Activated CD4-positive, alpha-beta T cell treated with anti-CD3 and anti-CD28 coated beads for 36 hours (primary cell): ENCODE measurements at regions of chr7 and their contacts with region 1.

Region 1: GRCh38 chr7:130182990-130183389 is 22.2 kb downstream of the TMEM209 start:
- DNase-seq: no peak
- ATAC-seq: peak; percentile 38
- H3K4me3 Mint-ChIP-seq: no peak overlapping the region
- H3K27ac Mint-ChIP-seq: peak overlapping the region; percentile 72
- H3K4me1 Mint-ChIP-seq: peaks cover 33% of the 10 kb centered on the region
- H3K27me3 Mint-ChIP-seq: no peaks in the 10 kb centered on the region

Region 2: GRCh38 chr7:130124711-130125110 is 58.3 kb before region 1 on chr7:
- CTCF ChIA-PET with region 1: no interaction called
- POLR2A ChIA-PET with region 1: no interaction called
- intact Hi-C with region 1: no loop called
- DNase-seq: no peak
- ATAC-seq: no peak
- H3K4me3 Mint-ChIP-seq: no peak overlapping the region
- H3K27ac Mint-ChIP-seq: no peak overlapping the region
- H3K4me1 Mint-ChIP-seq: no peaks in the 10 kb centered on the region
- H3K27me3 Mint-ChIP-seq: no peaks in the 10 kb centered on the region

Region 3: GRCh38 chr7:130205084-130205947 is 22.3 kb after region 1 on chr7 and contains the start of gene TMEM209:
- CTCF ChIA-PET with region 1: interaction called, 4 read pairs
- POLR2A ChIA-PET with region 1: interaction called, 5 read pairs
- intact Hi-C with region 1: loop called (anchors 1 to 2 kb)
- DNase-seq: peak; percentile 96
- ATAC-seq: peak; percentile 98
- H3K4me3 Mint-ChIP-seq: peak within 1 kb of the TSS; percentile 93
- H3K27ac Mint-ChIP-seq: peak within 1 kb of the TSS; percentile 100
- H3K4me1 Mint-ChIP-seq: peaks cover 35% of the 10 kb centered on the region
- H3K27me3 Mint-ChIP-seq: no peaks in the 10 kb centered on the region
- total RNA-seq, gene TMEM209: 41.0 to 57.0 TPM

Region 4: GRCh38 chr7:130227883-130228575 is 45.0 kb after region 1 on chr7:
- CTCF ChIA-PET with region 1: no interaction called
- POLR2A ChIA-PET with region 1: no interaction called
- intact Hi-C with region 1: no loop called
- DNase-seq: no peak
- ATAC-seq: no peak
- H3K4me3 Mint-ChIP-seq: no peak overlapping the region
- H3K27ac Mint-ChIP-seq: no peak overlapping the region
- H3K4me1 Mint-ChIP-seq: no peaks in the 10 kb centered on the region
- H3K27me3 Mint-ChIP-seq: no peaks in the 10 kb centered on the region

Region 5: DNA sequence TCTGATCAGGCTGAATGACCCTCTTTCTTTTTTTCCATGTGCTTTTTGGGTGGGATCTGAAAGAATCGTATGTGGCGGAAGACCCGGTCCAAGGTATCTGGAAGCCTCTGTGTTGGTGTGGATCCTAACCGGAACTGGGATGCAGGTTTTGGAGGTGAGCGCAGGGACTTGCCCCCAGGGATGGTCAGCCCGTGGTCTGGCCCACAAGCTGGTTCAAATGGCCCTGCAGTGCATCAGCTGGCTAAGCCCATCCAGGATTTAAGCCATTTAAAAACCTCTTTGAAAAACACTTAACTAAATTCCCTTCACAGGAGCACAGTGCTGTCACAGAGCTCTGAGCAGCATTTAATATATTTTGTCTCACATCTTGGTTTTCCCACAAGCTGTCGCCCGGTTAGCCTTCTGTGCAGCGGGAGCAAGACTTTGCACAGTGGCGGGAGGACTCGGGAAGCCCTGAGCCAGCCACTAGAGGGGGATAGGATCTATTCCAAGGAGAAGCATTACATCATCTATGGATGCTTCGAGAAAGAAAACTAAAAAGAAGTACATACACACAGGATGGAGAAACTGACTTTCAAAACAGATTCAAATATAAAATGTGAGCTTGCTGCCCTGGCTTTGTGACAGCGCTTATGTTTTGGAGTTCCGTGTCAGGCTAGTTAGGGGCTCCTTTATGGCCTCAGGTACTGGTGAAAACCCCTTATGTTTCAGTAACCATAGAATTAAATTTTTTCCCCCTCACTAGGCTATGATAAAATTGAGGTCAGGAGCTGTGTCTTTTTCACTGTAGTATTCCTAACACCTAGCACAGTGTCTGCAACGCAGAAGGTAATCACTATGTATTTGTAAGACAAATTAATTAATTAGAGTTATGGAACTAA is 95.0 kb after region 1 on chr7:
- CTCF ChIA-PET with region 1: no interaction called
- POLR2A ChIA-PET with region 1: no interaction called
- intact Hi-C with region 1: loop called (anchors 2 kb)
- DNase-seq: no peak
- ATAC-seq: no peak
- H3K4me3 Mint-ChIP-seq: no peak overlapping the region
- H3K27ac Mint-ChIP-seq: peak overlapping the region; percentile 79
- H3K4me1 Mint-ChIP-seq: peaks cover 37% of the 10 kb centered on the region
- H3K27me3 Mint-ChIP-seq: peaks cover 4% of the 10 kb centered on the region

Region 6: DNA sequence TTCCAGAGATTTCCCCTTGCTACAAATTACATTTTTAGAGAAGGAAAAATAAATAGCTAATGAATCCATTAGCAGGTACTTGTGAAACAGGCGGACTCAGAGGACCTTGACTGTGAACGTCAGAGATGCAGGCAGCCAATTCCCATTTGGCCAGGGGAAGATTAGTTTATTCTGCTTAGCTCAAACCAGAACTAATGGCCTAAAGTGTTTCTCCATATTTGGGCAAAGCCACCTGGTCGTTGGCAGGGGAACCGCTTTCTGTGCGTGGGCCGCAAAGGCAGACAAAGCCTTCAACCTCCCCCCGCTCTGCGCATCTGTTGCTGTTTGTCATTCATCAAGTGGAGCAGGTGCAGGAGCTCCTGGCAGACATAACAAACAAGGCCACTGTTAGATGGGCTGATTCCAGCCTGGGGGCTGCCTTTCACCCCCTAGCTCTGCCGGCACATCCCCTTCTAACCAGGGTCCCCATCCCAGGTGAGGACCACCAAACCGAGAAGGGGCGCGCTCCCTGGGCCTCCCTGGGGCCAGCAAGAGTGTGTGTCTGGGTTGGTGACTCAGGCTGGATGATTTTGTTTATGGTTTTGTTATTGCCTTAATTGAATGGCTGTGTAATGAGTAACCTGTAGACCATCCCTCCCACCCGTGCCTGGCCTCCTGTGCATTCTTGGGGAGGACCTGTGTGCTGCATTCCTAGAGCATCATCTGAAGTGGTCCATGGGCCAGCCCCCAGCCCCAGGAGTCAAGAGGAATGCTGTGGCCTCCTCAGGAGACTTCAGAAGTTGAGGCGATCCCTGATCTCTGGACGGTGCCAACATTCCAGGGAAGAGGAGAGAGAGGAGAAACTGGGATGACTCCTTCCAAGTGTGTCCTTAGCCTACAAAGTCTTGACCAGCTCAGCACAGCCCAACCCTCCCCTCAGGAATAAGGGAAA is 182.8 kb after region 1 on chr7:
- CTCF ChIA-PET with region 1: no interaction called
- POLR2A ChIA-PET with region 1: no interaction called
- intact Hi-C with region 1: loop called in 1 of 2 experiments (anchors 1 kb)
- DNase-seq: peak; percentile 57
- ATAC-seq: no peak
- H3K4me3 Mint-ChIP-seq: no peak overlapping the region
- H3K27ac Mint-ChIP-seq: no peak overlapping the region
- H3K4me1 Mint-ChIP-seq: peaks cover 43% of the 10 kb centered on the region
- H3K27me3 Mint-ChIP-seq: no peaks in the 10 kb centered on the region

Region 7: DNA sequence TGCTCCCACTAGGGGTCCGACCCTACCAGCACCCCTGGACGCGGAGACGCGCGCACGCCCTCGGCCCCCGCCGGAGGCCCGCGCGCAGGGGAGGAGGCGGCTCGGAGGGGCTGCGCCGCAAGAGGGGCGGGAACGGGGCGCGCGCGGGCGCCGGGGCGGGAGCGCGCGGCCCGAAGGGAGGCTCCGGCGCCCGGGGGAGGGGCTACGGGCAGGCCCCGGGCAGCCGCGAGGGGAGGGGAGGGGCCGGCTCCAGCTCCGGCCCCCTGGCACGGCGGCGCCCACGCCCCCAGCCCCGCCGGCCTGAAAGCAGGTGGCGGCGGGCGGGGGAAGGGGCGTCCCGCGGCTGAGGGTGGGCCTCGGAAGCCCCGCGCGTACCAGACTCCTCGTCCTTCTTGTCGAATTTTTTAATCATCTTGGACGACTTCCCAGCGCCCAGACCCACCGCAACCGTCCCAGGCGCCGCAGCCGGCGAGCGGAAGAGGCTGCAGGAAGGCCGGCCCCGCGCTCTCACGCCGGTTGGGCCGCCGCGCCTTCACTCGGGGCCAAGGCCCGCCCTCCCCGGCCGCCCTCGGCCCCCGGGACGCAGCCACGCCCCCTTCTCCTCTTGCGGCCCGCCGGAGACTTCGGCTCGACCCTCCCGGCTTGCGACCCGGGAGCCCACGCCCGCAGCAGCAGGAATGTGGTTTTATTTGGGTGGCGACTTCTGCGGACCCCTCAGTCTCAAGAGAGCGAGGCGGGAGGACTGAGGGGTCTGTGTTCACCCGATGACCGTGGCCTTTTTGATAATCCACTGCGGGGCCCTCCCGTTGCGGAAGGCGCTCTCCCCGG is 485.5 kb after region 1 on chr7 and contains the start of gene COPG2:
- CTCF ChIA-PET with region 1: no interaction called
- POLR2A ChIA-PET with region 1: no interaction called
- intact Hi-C with region 1: loop called in 1 of 2 experiments (anchors 1 kb)
- DNase-seq: peak; percentile 86
- ATAC-seq: peak; percentile 97
- H3K4me3 Mint-ChIP-seq: peak within 1 kb of the TSS; percentile 81
- H3K27ac Mint-ChIP-seq: peak within 1 kb of the TSS; percentile 70
- H3K4me1 Mint-ChIP-seq: peaks cover 16% of the 10 kb centered on the region
- H3K27me3 Mint-ChIP-seq: peaks cover 5% of the 10 kb centered on the region
- total RNA-seq, gene COPG2: 23.5 to 25.9 TPM

Region 8: GRCh38 chr7:130838738-130839137 is 655.7 kb after region 1 on chr7:
- CTCF ChIA-PET with region 1: no interaction called
- POLR2A ChIA-PET with region 1: no interaction called
- intact Hi-C with region 1: loop called in 1 of 2 experiments (anchors 1 kb)
- DNase-seq: peak; percentile 37
- ATAC-seq: peak; percentile 91
- H3K4me3 Mint-ChIP-seq: no peak overlapping the region
- H3K27ac Mint-ChIP-seq: peak overlapping the region; percentile 10
- H3K4me1 Mint-ChIP-seq: peaks cover 17% of the 10 kb centered on the region
- H3K27me3 Mint-ChIP-seq: peaks cover 30% of the 10 kb centered on the region

Region 9: GRCh38 chr7:131370523-131370968 is 1187.6 kb after region 1 on chr7:
- CTCF ChIA-PET with region 1: no interaction called
- POLR2A ChIA-PET with region 1: no interaction called
- intact Hi-C with region 1: loop called in 1 of 2 experiments (anchors 5 kb)
- DNase-seq: peak; percentile 30
- ATAC-seq: peak; percentile 64
- H3K4me3 Mint-ChIP-seq: no peak overlapping the region
- H3K27ac Mint-ChIP-seq: no peak overlapping the region
- H3K4me1 Mint-ChIP-seq: peaks cover 70% of the 10 kb centered on the region
- H3K27me3 Mint-ChIP-seq: no peaks in the 10 kb centered on the region